Naive thymus-derived CD4-positive, alpha-beta T cell (primary cell): ENCODE measurements at regions of chr21 and their contacts with region 1.

Region 1: DNA sequence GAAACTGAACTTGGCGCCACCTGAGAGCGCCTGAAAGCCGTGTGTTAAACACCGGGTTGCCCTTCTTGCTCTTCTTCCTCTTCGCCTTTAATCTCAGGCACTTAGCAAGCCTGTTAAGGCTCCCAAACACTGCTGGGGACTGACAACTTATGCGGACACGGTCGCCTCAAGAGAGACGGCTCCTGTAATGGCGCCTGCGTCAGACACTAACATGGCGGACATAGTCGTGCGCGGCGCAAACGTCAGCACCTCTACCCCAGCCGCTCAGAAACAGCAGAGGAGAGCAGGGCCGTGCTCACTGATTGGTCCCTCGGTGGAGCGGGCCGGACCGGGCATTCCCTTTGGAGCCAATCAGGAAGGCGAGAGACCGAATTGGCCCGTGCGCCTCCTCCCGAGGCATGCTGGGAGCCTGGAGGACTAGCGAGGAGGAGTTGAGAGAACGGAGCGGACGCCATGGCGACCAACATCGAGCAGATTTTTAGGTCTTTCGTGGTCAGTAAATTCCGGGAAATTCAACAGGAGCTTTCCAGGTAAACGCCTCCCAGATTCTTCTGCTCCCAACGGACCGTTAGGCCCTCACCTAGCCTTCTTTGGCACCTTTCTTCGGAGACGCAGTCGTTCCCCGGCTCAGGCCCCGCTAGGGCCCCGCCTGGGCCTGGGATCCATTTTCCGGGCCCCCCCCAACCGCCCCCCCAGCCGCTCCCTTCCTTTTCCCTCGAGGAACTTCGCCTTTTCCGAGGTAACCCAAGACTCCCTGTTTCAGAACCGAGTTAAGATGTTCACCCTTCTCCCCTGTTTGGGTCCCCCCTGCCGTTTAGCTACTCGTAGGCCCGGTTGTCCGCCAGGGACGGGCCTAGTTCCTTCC is at the start of gene SON:
- DNase-seq: peak; percentile 87 to 99 (median 98)
- ATAC-seq: peak; percentile 94
- H3K4me3 ChIP-seq: peak within 1 kb of the TSS; percentile 95
- H3K4me3 Mint-ChIP-seq: peak within 1 kb of the TSS; percentile 90 to 100 (median 97)
- H3K27ac ChIP-seq: peak within 1 kb of the TSS; percentile 99
- H3K27ac Mint-ChIP-seq: peak within 1 kb of the TSS; percentile 99 to 100 (median 99)
- H3K4me1 ChIP-seq: peaks cover 20 to 30% of the 10 kb centered on the region in 2 donors
- H3K4me1 Mint-ChIP-seq: peaks cover 29 to 54% (median 45%) of the 10 kb centered on the region in 7 donors
- H3K27me3 ChIP-seq: no peaks in the 10 kb centered on the region
- H3K27me3 Mint-ChIP-seq: peaks cover 0 to 5% (median 0%) of the 10 kb centered on the region in 5 donors
- total RNA-seq, gene SON: 337 to 497 (median 431) TPM

Region 2: DNA sequence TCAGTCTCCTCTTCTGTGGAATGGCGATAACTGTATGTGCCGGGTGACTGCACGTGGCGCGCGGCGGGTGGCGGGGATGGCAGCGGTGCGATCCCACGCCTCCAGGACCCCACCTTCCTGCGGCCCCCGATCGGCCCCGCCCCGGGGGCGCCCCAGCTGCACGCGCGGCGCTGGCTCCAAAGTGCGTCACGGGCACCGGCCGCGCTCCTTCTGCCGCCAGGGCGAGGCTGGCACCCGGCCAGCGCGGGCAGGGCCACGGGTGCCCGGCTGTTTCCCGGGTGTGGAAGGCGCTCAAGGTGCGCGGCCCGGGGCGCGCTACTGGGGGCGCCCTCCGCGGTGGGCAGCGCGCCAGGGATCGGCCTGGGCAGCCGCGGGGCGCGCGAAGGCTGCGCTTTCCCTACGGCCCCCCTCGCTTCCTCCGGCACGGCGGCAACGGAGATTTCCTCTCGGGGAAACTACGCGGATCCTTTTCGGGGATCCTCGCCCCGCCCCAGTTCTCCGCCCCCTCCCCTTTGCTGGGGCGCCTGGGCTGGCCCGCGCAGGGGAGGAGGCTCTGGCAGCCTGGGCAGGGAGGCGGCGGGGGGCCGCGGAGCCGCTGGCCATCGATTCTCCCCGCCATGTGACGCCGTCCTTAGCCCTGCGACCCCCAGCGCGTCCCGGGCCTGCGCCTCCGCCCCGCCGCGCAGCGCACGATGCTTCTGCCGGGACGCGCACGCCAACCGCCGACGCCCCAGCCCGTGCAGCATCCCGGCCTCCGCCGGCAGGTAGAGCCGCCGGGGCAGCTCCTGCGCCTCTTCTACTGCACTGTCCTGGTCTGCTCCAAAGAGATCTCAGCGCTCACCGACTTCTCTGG is 1130.5 kb before region 1 on chr21 and contains the start of gene EVA1C:
- CTCF ChIA-PET with region 1: no interaction called
- POLR2A ChIA-PET with region 1: no interaction called
- intact Hi-C with region 1: loop called in 1 of 2 experiments (anchors 5 kb)
- DNase-seq: peak; percentile 56 to 73 (median 70)
- ATAC-seq: peak; percentile 81
- H3K4me3 ChIP-seq: peak within 1 kb of the TSS; percentile 76
- H3K4me3 Mint-ChIP-seq: peak within 1 kb of the TSS; percentile 88 to 97 (median 94)
- H3K27ac ChIP-seq: peak within 1 kb of the TSS; percentile 85
- H3K27ac Mint-ChIP-seq: peak within 1 kb of the TSS; percentile 89 to 95 (median 93)
- H3K4me1 ChIP-seq: peaks cover 14 to 29% of the 10 kb centered on the region in 2 donors
- H3K4me1 Mint-ChIP-seq: peaks cover 22 to 57% (median 28%) of the 10 kb centered on the region in 7 donors
- H3K27me3 ChIP-seq: no peaks in the 10 kb centered on the region
- H3K27me3 Mint-ChIP-seq: peaks cover 0 to 7% (median 0%) of the 10 kb centered on the region in 5 donors
- total RNA-seq, gene EVA1C: 2.6 to 16.3 (median 12.3) TPM

Region 3: DNA sequence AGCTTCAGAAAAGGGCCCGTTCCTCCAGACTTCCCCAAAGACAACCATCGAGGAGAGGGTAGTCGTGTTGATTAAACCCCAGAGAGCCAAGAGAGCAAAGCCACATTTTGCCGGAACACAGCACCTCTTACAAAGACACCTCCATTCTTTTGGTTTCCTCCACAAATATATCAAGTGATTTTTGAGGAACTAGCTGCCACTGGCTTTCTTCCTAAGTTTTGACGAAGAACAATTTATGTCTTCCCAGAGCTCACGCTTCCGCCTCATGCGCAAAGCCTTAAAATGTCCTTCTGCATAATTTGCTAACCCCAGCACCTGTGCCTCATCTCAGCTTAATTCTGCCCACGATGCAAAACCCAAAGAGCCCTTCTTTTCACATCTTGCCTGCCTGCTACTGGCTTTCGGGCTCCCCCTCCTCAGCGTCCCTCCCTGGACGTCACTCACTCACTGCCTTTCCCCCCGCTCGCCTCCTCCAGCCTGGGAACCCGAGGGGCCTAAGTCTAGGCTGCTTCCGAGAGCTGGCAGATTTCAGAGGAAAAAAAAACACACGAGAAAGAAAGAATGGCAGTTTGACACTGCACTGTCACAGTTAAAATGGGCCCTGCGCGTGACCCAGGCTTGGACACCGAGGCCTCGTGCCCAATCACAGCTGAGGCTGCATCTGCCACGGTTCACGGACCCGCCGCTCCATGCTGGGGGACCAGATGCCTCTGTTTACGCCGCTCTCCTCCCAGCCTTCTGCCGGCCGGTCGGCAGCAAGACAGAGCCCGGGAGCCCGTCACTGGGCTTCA is 390.7 kb before region 1 on chr21:
- CTCF ChIA-PET with region 1: no interaction called
- POLR2A ChIA-PET with region 1: no interaction called
- intact Hi-C with region 1: no loop called
- DNase-seq: no peak
- ATAC-seq: no peak
- H3K4me3 ChIP-seq: no peak overlapping the region
- H3K4me3 Mint-ChIP-seq: peak overlapping the region in 3 of 10 donors; percentile 15 to 20 (median 18)
- H3K27ac ChIP-seq: no peak overlapping the region
- H3K27ac Mint-ChIP-seq: peak overlapping the region in 1 of 9 donors; percentile 7
- H3K4me1 ChIP-seq: no peaks in the 10 kb centered on the region
- H3K4me1 Mint-ChIP-seq: peaks cover 5 to 11% (median 8%) of the 10 kb centered on the region in 7 donors
- H3K27me3 ChIP-seq: no peaks in the 10 kb centered on the region
- H3K27me3 Mint-ChIP-seq: peaks cover 6 to 49% (median 10%) of the 10 kb centered on the region in 5 donors

Region 4: GRCh38 chr21:33229784-33230544 is 312.9 kb before region 1 on chr21 and contains the start of gene IFNAR2:
- CTCF ChIA-PET with region 1: no interaction called
- POLR2A ChIA-PET with region 1: no interaction called
- intact Hi-C with region 1: loop called in 1 of 2 experiments (anchors 5 kb)
- DNase-seq: peak; percentile 55 to 82 (median 68)
- ATAC-seq: peak; percentile 93
- H3K4me3 ChIP-seq: peak within 1 kb of the TSS; percentile 83
- H3K4me3 Mint-ChIP-seq: peak within 1 kb of the TSS; percentile 88 to 97 (median 92)
- H3K27ac ChIP-seq: peak within 1 kb of the TSS; percentile 92
- H3K27ac Mint-ChIP-seq: peak within 1 kb of the TSS; percentile 83 to 98 (median 90)
- H3K4me1 ChIP-seq: peaks cover 22 to 40% of the 10 kb centered on the region in 2 donors
- H3K4me1 Mint-ChIP-seq: peaks cover 35 to 59% (median 51%) of the 10 kb centered on the region in 7 donors
- H3K27me3 ChIP-seq: no peaks in the 10 kb centered on the region
- H3K27me3 Mint-ChIP-seq: no peaks in the 10 kb centered on the region
- total RNA-seq, gene IFNAR2: 44.9 to 85.8 (median 60.8) TPM

Region 5: DNA sequence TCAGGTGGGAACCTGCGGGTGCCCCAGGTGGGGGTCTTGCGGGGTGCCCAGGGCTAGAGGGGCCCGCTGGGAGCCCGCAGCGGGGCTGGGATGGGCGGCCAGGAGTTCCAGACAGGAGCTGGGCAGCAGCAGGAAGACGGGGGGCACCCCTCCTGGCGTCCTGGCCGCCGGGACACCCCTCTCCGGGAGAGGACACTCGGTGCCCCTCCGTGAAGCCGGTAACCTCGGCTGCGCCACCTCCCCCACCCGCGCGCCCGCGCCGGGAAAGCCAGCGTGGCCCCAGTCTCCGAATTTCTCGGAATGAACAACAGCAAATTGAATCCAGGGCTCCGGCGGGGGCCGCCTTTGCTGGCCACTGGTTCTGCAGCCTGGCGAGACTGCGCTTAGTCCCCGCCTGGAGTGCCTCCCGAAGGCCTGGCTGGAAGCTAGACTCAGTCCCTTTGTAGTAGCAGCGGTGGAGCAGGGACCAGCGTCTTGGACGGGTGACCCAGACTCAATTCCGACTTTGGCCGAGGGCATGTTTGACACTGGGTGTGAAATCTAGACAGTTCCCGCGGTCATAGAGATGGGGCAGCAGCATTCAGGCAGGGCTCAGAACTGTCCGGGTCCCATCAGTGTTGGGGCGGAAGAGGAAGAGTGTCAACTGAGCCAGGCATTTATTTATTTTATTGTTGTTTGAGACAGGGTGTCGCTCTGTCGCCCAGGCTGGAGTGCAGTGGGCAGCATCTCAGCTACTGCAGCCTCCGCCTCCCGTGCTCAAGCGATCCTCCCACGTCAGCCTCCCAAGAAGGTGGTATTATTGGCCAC is 138.9 kb before region 1 on chr21:
- CTCF ChIA-PET with region 1: no interaction called
- POLR2A ChIA-PET with region 1: no interaction called
- intact Hi-C with region 1: loop called in 1 of 2 experiments (anchors 1 kb)
- DNase-seq: peak in 7 of 9 donors; percentile 21 to 43 (median 29)
- ATAC-seq: peak; percentile 30
- H3K4me3 ChIP-seq: peak overlapping the region; percentile 77
- H3K4me3 Mint-ChIP-seq: peak overlapping the region; percentile 87 to 99 (median 97)
- H3K27ac ChIP-seq: peak overlapping the region; percentile 84
- H3K27ac Mint-ChIP-seq: peak overlapping the region; percentile 4 to 98 (median 94)
- H3K4me1 ChIP-seq: peaks cover 16 to 25% of the 10 kb centered on the region in 2 donors
- H3K4me1 Mint-ChIP-seq: peaks cover 25 to 60% (median 54%) of the 10 kb centered on the region in 7 donors
- H3K27me3 ChIP-seq: no peaks in the 10 kb centered on the region
- H3K27me3 Mint-ChIP-seq: peaks cover 0 to 63% (median 0%) of the 10 kb centered on the region in 5 donors

Region 6: DNA sequence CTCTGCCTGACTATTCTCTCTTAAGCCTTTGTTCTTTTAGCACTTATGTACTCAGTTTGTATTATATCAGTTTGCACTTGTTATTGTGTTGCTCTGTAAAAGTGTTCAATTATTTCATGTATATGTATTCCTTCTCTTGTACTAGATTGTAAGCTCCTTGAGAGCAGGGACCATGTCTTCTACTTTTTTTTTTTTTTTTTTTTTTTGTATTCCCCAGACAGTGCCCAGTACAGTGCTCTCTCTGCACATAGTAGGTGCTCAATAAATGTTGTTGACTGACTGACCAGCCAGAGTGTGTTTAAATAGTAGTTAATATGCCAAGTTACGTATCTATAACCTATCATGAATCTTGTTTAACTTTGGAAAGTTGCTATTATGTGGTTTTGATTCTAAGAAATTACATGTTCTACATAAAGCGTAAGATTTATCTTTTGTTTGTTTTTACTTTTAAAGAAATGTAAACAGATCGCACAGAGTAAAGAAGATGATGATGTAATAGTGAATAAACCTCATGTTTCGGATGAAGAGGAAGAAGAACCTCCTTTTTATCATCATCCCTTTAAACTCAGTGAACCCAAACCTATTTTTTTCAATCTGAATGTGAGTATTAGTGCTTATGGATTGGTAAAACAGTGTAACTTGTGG is 16.0 kb after region 1 on chr21:
- CTCF ChIA-PET with region 1: interaction called, 3 read pairs
- POLR2A ChIA-PET with region 1: interaction called, 69 read pairs
- intact Hi-C with region 1: loop called in 1 of 2 experiments (anchors 2 kb)
- DNase-seq: no peak
- ATAC-seq: no peak
- H3K4me3 ChIP-seq: no peak overlapping the region
- H3K4me3 Mint-ChIP-seq: peak overlapping the region in 6 of 10 donors; percentile 8 to 56 (median 26)
- H3K27ac ChIP-seq: no peak overlapping the region
- H3K27ac Mint-ChIP-seq: peak overlapping the region in 3 of 9 donors; percentile 3 to 30 (median 6)
- H3K4me1 ChIP-seq: peaks cover 6 to 22% of the 10 kb centered on the region in 2 donors
- H3K4me1 Mint-ChIP-seq: peaks cover 42 to 94% (median 86%) of the 10 kb centered on the region in 7 donors
- H3K27me3 ChIP-seq: no peaks in the 10 kb centered on the region
- H3K27me3 Mint-ChIP-seq: no peaks in the 10 kb centered on the region

Region 7: DNA sequence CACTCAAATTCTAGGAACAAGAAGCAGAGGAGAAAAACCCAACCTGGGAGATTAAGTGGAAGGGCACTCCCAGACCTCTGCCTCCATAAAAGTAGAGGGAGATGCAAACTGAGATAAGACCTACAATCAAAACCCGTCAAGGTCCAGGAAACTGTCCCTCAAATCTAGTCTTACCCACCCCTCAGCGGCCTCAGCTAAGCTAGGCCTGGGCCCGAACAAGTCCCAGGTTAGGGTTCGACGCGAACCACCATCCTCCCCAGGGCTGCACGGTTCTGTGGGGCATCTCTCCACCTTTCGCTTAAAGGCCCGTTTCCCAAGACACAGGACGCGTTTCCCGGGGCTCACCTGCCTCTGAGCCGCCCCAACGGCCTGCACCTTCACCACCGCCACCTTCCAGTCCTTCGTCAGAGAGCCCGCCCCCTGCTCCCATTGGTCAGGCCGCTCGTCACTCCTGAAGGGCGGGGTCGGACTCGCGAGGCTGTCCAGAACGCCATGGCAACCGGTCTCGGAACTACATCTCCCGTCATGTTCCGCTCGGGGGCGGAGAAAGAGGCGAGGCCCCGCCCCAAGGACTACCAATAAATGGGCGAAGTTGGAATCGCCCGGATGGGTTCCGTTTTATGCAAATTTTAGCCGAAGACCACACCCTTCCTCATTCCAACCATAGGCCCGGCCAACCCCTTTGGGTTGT is 98.6 kb after region 1 on chr21 and contains the start of gene CRYZL1:
- CTCF ChIA-PET with region 1: no interaction called
- POLR2A ChIA-PET with region 1: no interaction called
- intact Hi-C with region 1: loop called (anchors 1 kb)
- DNase-seq: peak; percentile 96 to 100 (median 100)
- ATAC-seq: peak; percentile 89
- H3K4me3 ChIP-seq: peak within 1 kb of the TSS; percentile 97
- H3K4me3 Mint-ChIP-seq: peak within 1 kb of the TSS; percentile 83 to 99 (median 93)
- H3K27ac ChIP-seq: peak within 1 kb of the TSS; percentile 75
- H3K27ac Mint-ChIP-seq: peak within 1 kb of the TSS; percentile 85 to 100 (median 94)
- H3K4me1 ChIP-seq: peaks cover 4 to 7% of the 10 kb centered on the region in 2 donors
- H3K4me1 Mint-ChIP-seq: peaks cover 19 to 50% (median 37%) of the 10 kb centered on the region in 7 donors
- H3K27me3 ChIP-seq: no peaks in the 10 kb centered on the region
- H3K27me3 Mint-ChIP-seq: peaks cover 9 to 29% (median 15%) of the 10 kb centered on the region in 5 donors
- total RNA-seq, gene CRYZL1: 34.6 to 75.5 (median 40.4) TPM

Region 8: GRCh38 chr21:33947451-33948095 is 404.7 kb after region 1 on chr21:
- CTCF ChIA-PET with region 1: no interaction called
- POLR2A ChIA-PET with region 1: no interaction called
- intact Hi-C with region 1: loop called in 1 of 2 experiments (anchors 2 kb)
- DNase-seq: peak; percentile 47 to 95 (median 84)
- ATAC-seq: peak; percentile 76
- H3K4me3 ChIP-seq: peak overlapping the region; percentile 38
- H3K4me3 Mint-ChIP-seq: peak overlapping the region; percentile 71 to 87 (median 78)
- H3K27ac ChIP-seq: peak overlapping the region; percentile 93
- H3K27ac Mint-ChIP-seq: peak overlapping the region; percentile 98 to 100 (median 98)
- H3K4me1 ChIP-seq: peaks cover 56 to 64% of the 10 kb centered on the region in 2 donors
- H3K4me1 Mint-ChIP-seq: peaks cover 53 to 85% (median 77%) of the 10 kb centered on the region in 7 donors
- H3K27me3 ChIP-seq: no peaks in the 10 kb centered on the region
- H3K27me3 Mint-ChIP-seq: peaks cover 0 to 6% (median 0%) of the 10 kb centered on the region in 5 donors